ENCODE measurements at regions of chrX and their contacts with region 1.

Region 1: DNA sequence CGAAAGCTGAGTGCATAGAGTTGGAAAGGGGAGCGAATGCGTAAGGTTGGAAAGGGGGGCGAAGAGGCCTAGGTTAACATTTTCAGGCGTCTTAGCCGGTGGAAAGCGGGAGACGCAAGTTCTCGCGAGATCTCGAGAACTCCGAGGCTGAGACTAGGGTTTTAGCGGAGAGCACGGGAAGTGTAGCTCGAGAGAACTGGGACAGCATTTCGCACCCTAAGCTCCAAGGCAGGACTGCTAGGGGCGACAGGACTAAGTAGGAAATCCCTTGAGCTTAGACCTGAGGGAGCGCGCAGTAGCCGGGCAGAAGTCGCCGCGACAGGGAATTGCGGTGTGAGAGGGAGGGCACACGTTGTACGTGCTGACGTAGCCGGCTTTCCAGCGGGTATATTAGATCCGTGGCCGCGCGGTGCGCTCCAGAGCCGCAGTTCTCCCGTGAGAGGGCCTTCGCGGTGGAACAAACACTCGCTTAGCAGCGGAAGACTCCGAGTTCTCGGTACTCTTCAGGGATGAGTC is at the start of gene DDX3X:
- H3K4me3 ChIP-seq: peak within 1 kb of the TSS; percentile 68
- H3K27ac ChIP-seq: peak within 1 kb of the TSS; percentile 100
- H3K4me1 ChIP-seq: peaks cover 8% of the 10 kb centered on the region
- CTCF ChIP-seq: peak; percentile 58

Region 2: GRCh38 chrX:41302365-41302764 is 31.4 kb before region 1 on chrX:
- CTCF ChIA-PET with region 1: interaction called, 3 read pairs
- POLR2A ChIA-PET with region 1: interaction called, 14 read pairs
- H3K4me3 ChIP-seq: no peak overlapping the region
- H3K27ac ChIP-seq: peak overlapping the region; percentile 28; the same call in 1 of the 2 replicates
- H3K4me1 ChIP-seq: peaks cover 7% of the 10 kb centered on the region
- CTCF ChIP-seq: no peak

Region 3: GRCh38 chrX:41384041-41384705 is 50.4 kb after region 1 on chrX:
- CTCF ChIA-PET with region 1: no interaction called
- POLR2A ChIA-PET with region 1: interaction called, 25 read pairs
- H3K4me3 ChIP-seq: no peak overlapping the region
- H3K27ac ChIP-seq: no peak overlapping the region; the same call in 1 of the 2 replicates
- H3K4me1 ChIP-seq: peaks cover 14% of the 10 kb centered on the region
- CTCF ChIP-seq: no peak

Region 4: DNA sequence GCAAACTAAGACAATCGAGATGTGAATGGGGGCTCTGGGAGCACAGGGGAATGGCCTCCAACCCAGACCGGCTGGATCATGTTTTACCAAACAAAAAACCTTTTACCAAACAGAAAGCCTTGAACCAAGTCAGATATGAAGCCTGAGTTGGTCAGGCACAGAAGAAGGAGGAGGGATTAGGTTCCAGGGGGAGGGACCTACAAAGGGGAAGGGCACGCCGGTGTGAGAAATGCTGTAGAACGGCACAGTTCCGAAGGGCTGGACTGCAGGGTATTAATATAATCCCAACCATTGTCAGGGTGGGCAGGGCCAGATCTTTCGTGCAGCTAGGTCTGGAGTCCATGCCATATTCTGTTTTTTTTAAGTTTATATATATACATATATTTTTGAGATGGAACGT is 60.5 kb after region 1 on chrX:
- CTCF ChIA-PET with region 1: no interaction called
- POLR2A ChIA-PET with region 1: no interaction called
- H3K4me3 ChIP-seq: no peak overlapping the region
- H3K27ac ChIP-seq: no peak overlapping the region
- H3K4me1 ChIP-seq: no peaks in the 10 kb centered on the region
- CTCF ChIP-seq: no peak

Region 5: DNA sequence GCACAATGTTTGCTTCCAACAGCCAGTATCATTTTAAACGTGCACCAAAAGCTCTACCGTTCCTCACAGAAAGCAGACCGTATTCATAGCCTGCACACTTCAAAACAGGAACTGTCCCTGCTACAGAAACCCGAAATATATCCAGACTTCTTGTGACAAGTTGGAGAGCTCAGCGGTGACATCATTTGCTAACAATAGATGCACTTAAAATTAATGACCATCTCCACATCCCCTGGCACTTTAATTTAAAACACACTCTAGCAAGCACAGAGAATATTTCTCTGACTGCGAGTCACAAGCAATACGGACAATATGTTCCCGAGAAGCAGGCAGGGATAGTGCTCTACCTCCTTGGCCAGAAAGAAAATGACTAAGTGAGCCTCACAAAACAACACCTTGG is 115.8 kb after region 1 on chrX:
- CTCF ChIA-PET with region 1: interaction called, 3 read pairs
- POLR2A ChIA-PET with region 1: interaction called, 18 read pairs
- H3K4me3 ChIP-seq: peak overlapping the region; percentile 12; the same call in 1 of the 2 replicates
- H3K27ac ChIP-seq: peak overlapping the region; percentile 51
- H3K4me1 ChIP-seq: peaks cover 17% of the 10 kb centered on the region
- CTCF ChIP-seq: no peak

Region 6: DNA sequence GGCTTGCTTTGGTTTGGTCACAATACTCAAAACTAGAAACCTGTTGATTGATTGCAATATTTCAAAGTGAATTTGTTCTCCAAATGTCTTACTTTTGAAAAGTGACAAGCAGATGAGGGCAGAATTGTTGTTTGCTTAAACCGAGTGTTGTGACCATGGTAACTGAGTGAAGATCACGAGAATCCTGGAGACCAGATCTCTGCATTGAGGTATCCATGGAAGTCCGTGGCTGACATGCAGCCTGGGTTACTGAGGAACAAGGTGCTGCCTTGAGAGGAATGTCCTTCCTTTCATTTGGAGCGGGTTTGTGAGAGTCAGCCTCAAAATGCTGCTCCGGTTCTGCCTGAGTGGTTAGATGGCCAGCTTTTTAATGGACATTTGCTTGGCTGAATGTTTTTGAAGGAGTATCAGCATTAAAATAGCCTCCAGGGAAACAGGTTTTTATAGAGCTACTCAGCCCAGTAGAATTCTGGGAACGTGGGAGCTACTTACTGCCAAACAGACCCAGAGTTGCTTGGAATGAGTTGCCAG is 144.6 kb after region 1 on chrX:
- CTCF ChIA-PET with region 1: no interaction called
- POLR2A ChIA-PET with region 1: no interaction called
- H3K4me3 ChIP-seq: no peak overlapping the region
- H3K27ac ChIP-seq: no peak overlapping the region
- H3K4me1 ChIP-seq: no peaks in the 10 kb centered on the region
- CTCF ChIP-seq: no peak

Measured in HEK293 (cell line).